ENCODE measurements at regions of chr12 and their contacts with region 1.

Region 1: DNA sequence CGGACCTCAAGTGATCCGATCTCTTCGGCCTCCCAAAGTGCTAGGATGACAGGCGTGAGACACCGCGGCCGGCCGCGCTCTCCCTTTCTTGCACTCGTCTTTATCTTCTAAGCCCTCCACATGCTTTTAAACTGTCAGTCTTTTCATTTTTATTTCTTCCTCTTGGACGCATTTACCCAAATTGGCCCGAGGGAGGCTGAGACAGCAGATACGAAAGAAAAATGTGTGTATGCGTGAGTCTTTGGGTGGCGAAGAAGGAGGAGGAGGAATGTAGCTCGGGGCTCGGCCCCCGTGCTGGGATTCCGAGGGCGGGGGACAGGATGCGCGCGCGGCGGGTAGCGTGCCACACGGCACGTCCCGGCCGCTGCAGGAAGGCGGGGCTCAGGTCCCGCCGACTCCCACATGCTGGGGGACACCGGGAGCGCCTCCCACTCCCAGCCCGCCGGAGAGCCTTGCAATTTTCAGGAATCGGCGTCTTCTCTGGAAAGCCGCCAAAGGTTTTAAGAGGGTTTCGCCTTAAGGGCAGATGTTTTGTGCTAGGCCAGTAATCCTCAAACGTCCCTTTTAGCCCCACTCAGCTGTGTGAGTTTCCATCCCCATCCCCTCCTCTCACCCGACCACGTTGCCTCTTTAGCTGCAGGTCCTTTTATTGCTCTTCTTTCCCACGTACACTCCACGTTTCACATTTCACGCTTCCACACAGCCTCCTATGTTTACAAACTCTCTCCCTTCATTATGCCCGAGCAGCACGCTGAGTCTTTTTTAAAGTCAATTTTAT is 34.7 kb upstream of the SLC2A3 start:
- DNase-seq: peak; percentile 90
- ATAC-seq: peak; percentile 97 to 99 (median 98)
- H3K4me3 ChIP-seq: peak overlapping the region; percentile 41 to 65 (median 55)
- H3K27ac ChIP-seq: peak overlapping the region; percentile 79 to 94 (median 86)
- H3K4me1 ChIP-seq: peaks cover 0 to 39% (median 16%) of the 10 kb centered on the region in 9 donors
- H3K27me3 ChIP-seq: peaks cover 0 to 6% (median 0%) of the 10 kb centered on the region in 7 donors
- CTCF ChIP-seq: peak in 2 of 9 donors; percentile 15 to 18

Region 2: GRCh38 chr12:7092229-7092985 is 878.3 kb before region 1 on chr12 and contains the start of gene C1R:
- intact Hi-C with region 1: no loop called
- DNase-seq: peak; percentile 66 to 77
- ATAC-seq: peak; percentile 74 to 88 (median 84)
- H3K4me3 ChIP-seq: peak within 1 kb of the TSS; percentile 9 to 67 (median 58)
- H3K27ac ChIP-seq: peak within 1 kb of the TSS; percentile 46 to 84 (median 79)
- H3K4me1 ChIP-seq: peaks cover 0 to 26% (median 16%) of the 10 kb centered on the region in 9 donors
- H3K27me3 ChIP-seq: no peaks in the 10 kb centered on the region
- CTCF ChIP-seq: peak; percentile 83 to 94 (median 91)
- total RNA-seq, gene C1R: 19.9 to 238 (median 59.0) TPM

Region 3: GRCh38 chr12:7361265-7361664 is 609.4 kb before region 1 on chr12:
- intact Hi-C with region 1: no loop called
- DNase-seq: no peak
- ATAC-seq: no peak
- H3K4me3 ChIP-seq: no peak overlapping the region
- H3K27ac ChIP-seq: no peak overlapping the region
- H3K4me1 ChIP-seq: no peaks in the 10 kb centered on the region
- H3K27me3 ChIP-seq: peaks cover 0 to 6% (median 0%) of the 10 kb centered on the region in 7 donors
- CTCF ChIP-seq: no peak

Region 4: GRCh38 chr12:7959701-7960121 is 11.0 kb before region 1 on chr12:
- intact Hi-C with region 1: loop called in 1 of 10 experiments (anchors 1 kb)
- DNase-seq: no peak
- ATAC-seq: peak in 3 of 8 donors; percentile 21 to 28 (median 27)
- H3K4me3 ChIP-seq: peak overlapping the region in 2 of 10 donors; percentile 53 to 59
- H3K27ac ChIP-seq: peak overlapping the region in 4 of 10 donors; percentile 78 to 93 (median 85)
- H3K4me1 ChIP-seq: peaks cover 0 to 52% (median 4%) of the 10 kb centered on the region in 9 donors
- H3K27me3 ChIP-seq: no peaks in the 10 kb centered on the region
- CTCF ChIP-seq: no peak

Measured in heart right ventricle (tissue), 16 donors.